ENCODE measurements at regions of chr4 and their contacts with region 1.

Region 1: GRCh38 chr4:154551872-154552686 is 1.9 kb upstream of the PLRG1 start:
- DNase-seq: peak; percentile 62

Region 2: GRCh38 chr4:154516318-154517029 is 35.6 kb before region 1 on chr4:
- CTCF ChIA-PET with region 1: no interaction called
- POLR2A ChIA-PET with region 1: interaction called, 12 read pairs
- DNase-seq: no peak

Region 3: GRCh38 chr4:154526151-154526550 is 25.9 kb before region 1 on chr4:
- CTCF ChIA-PET with region 1: no interaction called
- POLR2A ChIA-PET with region 1: interaction called, 10 read pairs
- DNase-seq: no peak

Region 4: DNA sequence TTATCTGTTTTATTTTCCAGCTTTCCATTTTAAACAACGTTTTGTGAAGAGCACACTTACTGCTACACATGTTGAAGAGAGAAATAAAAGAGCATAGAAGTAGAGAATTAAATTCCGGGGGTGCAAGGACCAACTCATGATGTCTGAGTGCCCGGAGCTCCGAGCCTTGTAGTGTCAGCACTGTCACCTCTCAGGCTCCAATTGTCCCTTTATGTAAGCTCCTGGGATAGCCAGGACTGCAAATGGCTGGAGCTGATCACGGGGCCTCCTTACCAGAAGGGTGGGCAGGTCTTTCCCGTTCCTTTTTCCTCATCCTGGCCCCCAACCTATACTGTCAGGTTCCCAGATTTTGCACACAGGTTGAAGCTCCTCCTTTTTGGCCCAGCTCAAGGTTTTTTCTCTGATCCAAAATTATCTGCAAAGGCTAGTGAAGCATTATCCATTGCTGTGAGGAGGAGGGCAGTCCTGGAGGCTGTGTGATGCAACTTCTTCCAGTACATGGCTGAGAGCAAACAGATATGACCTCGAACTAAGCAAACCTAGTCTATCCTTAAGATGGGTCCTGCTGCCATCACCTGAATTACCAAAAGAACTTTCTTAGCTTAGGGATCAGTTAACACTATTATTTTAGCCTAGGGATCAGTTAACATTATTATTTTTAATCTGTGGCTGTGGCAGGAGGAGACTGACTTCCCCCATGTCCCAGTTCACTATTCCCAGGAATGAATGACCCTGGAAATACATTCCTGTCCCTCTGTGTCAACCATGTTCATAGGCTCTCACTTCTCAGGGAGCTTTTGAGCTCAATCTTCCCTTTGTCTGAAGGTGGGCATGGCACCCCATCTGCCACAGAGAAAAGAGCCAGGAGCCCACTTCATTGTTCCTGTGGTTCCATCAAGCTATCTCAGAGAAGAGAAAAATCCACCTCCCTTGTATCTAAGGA is 60.7 kb after region 1 on chr4 and contains the start of gene FGG:
- CTCF ChIA-PET with region 1: interaction called, 67 read pairs
- POLR2A ChIA-PET with region 1: interaction called, 10 read pairs
- DNase-seq: no peak

Region 5: DNA sequence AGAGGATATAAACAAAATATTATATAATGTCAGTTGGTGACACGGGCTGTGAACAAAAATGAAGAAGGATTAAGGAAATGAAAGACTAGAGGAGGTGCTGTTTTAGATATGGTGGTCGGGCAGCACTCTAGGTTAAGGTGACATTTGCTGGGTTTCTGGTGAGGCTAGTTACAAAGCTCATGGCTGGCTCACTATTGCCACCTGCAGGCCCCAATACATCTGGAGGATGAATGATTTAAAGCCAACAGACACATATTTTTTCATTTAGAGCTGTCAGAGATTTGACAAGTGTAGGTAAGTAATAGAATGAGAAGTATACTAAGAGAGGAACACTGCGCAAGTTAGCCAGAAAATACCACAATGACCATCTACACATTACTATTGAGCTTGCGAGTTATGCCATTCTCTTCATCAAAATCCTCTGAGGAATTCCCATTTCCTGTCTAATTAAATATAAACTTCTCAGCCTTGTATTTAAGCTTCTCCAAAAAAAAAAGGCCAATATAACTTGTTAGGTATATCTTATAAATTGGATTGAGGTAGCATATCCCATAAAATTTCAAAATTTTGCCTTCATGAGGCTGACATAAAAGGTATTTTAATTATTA is 66.7 kb after region 1 on chr4:
- CTCF ChIA-PET with region 1: interaction called, 67 read pairs
- POLR2A ChIA-PET with region 1: interaction called, 13 read pairs
- DNase-seq: peak; percentile 61

Region 6: GRCh38 chr4:154626793-154627484 is 74.9 kb after region 1 on chr4:
- CTCF ChIA-PET with region 1: interaction called, 67 read pairs
- POLR2A ChIA-PET with region 1: interaction called, 11 read pairs
- DNase-seq: peak; percentile 32